ENCODE measurements at regions of chr14 and their contacts with region 1.

Region 1: DNA sequence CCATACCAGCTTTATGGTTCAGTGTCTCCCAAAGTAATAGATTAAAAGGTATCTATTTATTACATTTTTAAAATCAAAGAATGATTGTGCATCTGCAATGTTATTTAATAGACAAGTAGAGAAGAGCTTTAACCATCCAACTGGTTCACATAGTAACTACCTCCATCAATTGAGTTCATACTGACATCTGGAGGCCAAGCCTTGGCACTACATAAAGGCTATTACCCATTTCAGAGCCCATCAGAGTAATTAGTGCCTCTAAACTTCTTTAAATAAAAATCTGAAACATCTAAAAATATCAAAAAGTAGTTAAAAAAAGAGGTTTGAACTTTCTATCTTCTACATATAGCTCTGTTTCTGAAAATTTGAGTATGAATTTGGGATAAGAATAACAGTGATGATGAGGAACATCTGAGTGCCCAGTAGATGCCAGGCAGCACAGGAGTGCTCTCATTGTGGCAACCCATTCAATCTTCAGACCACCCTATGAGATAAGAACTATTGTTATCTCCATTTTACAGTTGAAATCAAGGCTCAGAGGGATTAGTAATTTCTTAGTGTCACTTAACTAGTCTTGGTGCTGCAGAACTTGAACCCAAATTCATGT is 132.9 kb upstream of the DAAM1 start:
- DNase-seq: peak; percentile 72
- ATAC-seq: peak; percentile 93
- H3K4me3 ChIP-seq: no peak overlapping the region
- H3K27ac ChIP-seq: no peak overlapping the region
- H3K4me1 ChIP-seq: no peaks in the 10 kb centered on the region
- H3K27me3 ChIP-seq: peaks cover 1% of the 10 kb centered on the region; the same call in 1 of the 2 replicates
- CTCF ChIP-seq: peak; percentile 88
- POLR2A ChIP-seq: no peak
- RAD21 ChIP-seq: peak; percentile 91

Region 2: GRCh38 chr14:58994130-58994529 is 61.4 kb before region 1 on chr14:
- CTCF ChIA-PET with region 1: no interaction called
- POLR2A ChIA-PET with region 1: no interaction called
- dilution Hi-C with region 1: no loop called
- in situ Hi-C with region 1: no loop called
- intact Hi-C with region 1: no loop called
- DNase-seq: no peak
- ATAC-seq: no peak
- H3K4me3 ChIP-seq: no peak overlapping the region
- H3K27ac ChIP-seq: no peak overlapping the region
- H3K4me1 ChIP-seq: no peaks in the 10 kb centered on the region
- H3K27me3 ChIP-seq: peaks cover 4% of the 10 kb centered on the region
- CTCF ChIP-seq: no peak
- POLR2A ChIP-seq: no peak
- RAD21 ChIP-seq: no peak

Region 3: DNA sequence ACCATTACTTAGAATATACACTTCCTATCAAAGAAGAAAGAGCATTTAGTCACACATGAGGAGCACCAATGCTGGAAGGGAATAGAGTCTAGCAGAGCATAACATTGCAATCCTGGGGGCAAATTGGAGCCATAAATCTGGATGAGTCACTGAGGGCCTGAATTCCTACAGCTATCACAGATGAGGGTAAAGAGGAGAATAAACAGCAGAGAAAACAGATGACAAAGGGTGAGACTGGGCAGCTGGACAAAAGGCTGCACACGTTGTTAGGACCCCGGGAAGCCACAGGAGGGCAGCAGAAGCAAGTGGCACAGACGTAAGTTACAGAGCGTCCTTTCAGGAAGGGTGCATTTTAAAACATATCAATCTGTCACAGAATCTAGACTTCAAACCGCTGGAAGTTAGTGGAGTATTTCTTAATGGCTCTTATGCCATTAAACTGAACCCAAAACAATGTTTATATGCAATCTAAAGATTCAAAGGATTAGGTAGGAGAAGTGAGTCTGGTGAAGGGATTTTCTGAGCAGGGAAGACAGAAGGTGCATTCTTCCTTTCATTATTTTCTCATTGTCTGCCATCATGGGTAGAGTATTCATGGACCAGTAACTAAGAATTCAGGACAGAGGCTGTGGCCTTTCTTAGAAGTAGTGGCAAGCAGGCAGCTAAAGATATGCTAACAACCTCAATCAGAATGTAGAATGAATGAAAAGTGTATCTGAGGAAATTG is 26.9 kb before region 1 on chr14:
- CTCF ChIA-PET with region 1: interaction called, 3 read pairs
- POLR2A ChIA-PET with region 1: no interaction called
- dilution Hi-C with region 1: no loop called
- in situ Hi-C with region 1: no loop called
- intact Hi-C with region 1: loop called (anchors 2 kb)
- DNase-seq: peak; percentile 97
- ATAC-seq: peak; percentile 99
- H3K4me3 ChIP-seq: no peak overlapping the region
- H3K27ac ChIP-seq: no peak overlapping the region
- H3K4me1 ChIP-seq: no peaks in the 10 kb centered on the region
- H3K27me3 ChIP-seq: no peaks in the 10 kb centered on the region
- CTCF ChIP-seq: peak; percentile 95
- POLR2A ChIP-seq: no peak
- RAD21 ChIP-seq: peak; percentile 89